Activated B cell treated with CpG ODN at 0.5 μM for 24 hours (primary cell): ENCODE measurements at regions of chr16 and their contacts with region 1.

Region 1: DNA sequence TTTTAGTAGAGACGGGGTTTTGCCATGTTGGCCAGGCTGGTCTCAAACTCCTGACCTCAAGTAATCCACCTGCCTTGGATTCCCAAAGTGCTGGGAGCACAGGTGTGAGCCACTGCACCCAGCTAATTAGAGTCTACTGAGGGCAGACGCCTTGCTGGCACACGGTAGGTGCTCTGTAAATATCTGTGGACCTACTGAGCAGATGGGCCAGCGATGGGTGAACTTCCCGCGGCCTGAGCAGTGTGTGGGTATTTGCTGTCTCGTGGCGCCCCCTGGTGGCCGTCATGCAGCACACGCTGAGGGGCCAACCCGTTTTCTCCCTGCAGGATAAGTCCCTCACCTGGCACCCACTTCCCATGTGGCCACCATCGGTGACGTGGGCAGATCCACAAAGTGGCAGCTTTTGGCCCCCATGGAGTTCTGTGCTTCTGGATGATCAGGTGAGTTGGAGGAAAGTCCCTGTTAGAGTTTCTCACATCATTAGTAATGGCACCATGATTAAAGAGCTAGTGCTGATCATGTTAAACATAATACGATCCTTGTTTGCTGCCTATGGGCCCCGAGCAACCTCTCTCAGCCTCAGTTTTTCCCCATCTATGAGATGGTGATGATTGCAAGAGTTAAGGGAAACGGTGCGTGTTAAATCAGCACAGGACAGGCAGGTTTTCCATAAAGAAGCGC is 40.7 kb downstream of the ZDHHC7 start:
- DNase-seq: peak; percentile 65
- ATAC-seq: peak; percentile 81
- H3K4me3 Mint-ChIP-seq: no peak overlapping the region
- H3K27ac Mint-ChIP-seq: no peak overlapping the region
- H3K4me1 Mint-ChIP-seq: peaks cover 4% of the 10 kb centered on the region
- H3K27me3 Mint-ChIP-seq: peaks cover 3% of the 10 kb centered on the region
- CTCF ChIP-seq: peak; percentile 53

Region 2: GRCh38 chr16:84925092-84925772 is 45.4 kb before region 1 on chr16:
- CTCF ChIA-PET with region 1: interaction called, 4 read pairs
- POLR2A ChIA-PET with region 1: no interaction called
- intact Hi-C with region 1: loop called (anchors 1 kb)
- DNase-seq: peak; percentile 62
- ATAC-seq: no peak
- H3K4me3 Mint-ChIP-seq: no peak overlapping the region
- H3K27ac Mint-ChIP-seq: no peak overlapping the region
- H3K4me1 Mint-ChIP-seq: no peaks in the 10 kb centered on the region
- H3K27me3 Mint-ChIP-seq: peaks cover 3% of the 10 kb centered on the region
- CTCF ChIP-seq: no peak

Region 3: DNA sequence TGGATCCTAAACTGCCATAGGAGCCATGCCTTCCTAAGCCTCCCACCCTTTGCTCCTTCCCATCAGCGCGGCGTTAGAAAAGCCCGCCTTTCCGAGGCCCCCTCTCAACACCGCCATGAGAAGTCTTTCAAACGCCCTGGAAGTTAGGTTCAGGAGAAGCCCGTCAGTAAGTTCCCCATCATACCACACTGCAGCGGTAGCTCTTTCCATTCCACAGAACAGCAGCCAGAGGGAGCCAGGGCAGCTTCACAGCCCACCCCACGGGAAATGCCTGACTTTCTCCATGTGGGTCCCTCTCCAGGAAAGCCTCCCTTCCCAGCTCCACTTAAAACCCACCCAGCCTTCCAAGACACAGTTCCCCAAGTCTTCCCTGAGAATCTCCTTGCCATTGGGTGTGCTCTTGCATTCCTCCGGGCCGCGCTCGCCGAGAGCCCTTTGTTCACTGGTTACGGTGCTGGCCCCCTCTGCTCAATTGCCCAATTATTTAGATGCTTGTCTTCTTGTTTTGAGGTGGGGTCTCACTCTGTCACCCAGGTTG is 85.7 kb after region 1 on chr16:
- CTCF ChIA-PET with region 1: no interaction called
- POLR2A ChIA-PET with region 1: no interaction called
- intact Hi-C with region 1: no loop called
- DNase-seq: no peak
- ATAC-seq: no peak
- H3K4me3 Mint-ChIP-seq: peak overlapping the region; percentile 78
- H3K27ac Mint-ChIP-seq: no peak overlapping the region
- H3K4me1 Mint-ChIP-seq: peaks cover 38% of the 10 kb centered on the region
- H3K27me3 Mint-ChIP-seq: peaks cover 6% of the 10 kb centered on the region
- CTCF ChIP-seq: no peak